T-cell (primary cell): ENCODE measurements at regions of chr13 and their contacts with region 1.

Region 1: DNA sequence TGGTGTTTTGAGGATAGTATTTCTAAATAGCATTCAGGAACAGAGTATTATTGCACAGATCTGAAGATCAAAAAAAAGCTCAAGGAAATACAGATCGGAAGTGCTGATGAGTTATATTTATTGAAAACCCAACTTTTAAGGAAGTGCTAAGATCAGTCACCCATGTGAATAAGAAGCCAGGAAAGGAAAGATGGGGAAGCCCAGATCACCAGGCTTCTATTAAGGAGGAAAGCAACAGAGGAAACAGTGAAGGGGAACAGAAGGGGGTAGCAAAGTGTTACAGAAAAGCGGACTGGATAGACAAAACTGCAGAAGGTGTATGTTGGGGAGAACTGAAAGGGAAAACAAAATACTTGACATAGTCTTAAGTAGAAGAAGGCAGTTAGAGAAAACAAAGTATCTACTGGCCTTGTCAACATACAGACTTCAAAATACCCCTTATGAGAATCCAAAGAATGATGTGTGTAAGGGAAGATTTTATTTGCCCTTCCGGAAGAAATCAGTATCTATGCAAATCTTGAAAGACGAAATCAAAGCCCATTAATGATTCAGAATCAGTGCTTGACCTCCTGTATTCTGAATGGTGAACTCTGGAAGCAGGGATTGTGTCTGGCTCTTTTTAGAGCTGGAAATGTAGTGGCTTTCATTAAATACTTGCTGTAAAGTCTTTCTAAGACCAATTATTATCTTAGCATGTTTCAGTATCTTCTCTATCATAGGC is 12.1 kb downstream of the UFM1 start:
- DNase-seq: no peak
- ATAC-seq: no peak
- H3K4me3 ChIP-seq: no peak overlapping the region
- H3K4me3 Mint-ChIP-seq: no peak overlapping the region
- H3K27ac ChIP-seq: no peak overlapping the region
- H3K27ac Mint-ChIP-seq: no peak overlapping the region
- H3K4me1 ChIP-seq: no peaks in the 10 kb centered on the region
- H3K4me1 Mint-ChIP-seq: peaks cover 4 to 12% (median 4%) of the 10 kb centered on the region in 3 donors
- H3K27me3 ChIP-seq: no peaks in the 10 kb centered on the region
- H3K27me3 Mint-ChIP-seq: no peaks in the 10 kb centered on the region

Region 2: GRCh38 chr13:39037880-39038568 is 676.3 kb after region 1 on chr13 and contains the starts of genes NHLRC3 and PROSER1:
- CTCF ChIA-PET with region 1: no interaction called
- POLR2A ChIA-PET with region 1: interaction called in 1 of 2 experiments, 15 read pairs
- DNase-seq: peak; percentile 72 to 90 (median 80)
- ATAC-seq: peak; percentile 80 to 87 (median 82)
- H3K4me3 ChIP-seq: peak within 1 kb of the TSS; percentile 93 to 99
- H3K4me3 Mint-ChIP-seq: peak within 1 kb of the TSS; percentile 90 to 92 (median 91)
- H3K27ac ChIP-seq: peak within 1 kb of the TSS; percentile 75
- H3K27ac Mint-ChIP-seq: peak within 1 kb of the TSS; percentile 93 to 99
- H3K4me1 ChIP-seq: peaks cover 15 to 25% of the 10 kb centered on the region in 2 experiments
- H3K4me1 Mint-ChIP-seq: peaks cover 60 to 69% (median 60%) of the 10 kb centered on the region in 3 donors
- H3K27me3 ChIP-seq: no peaks in the 10 kb centered on the region
- H3K27me3 Mint-ChIP-seq: no peaks in the 10 kb centered on the region
- total RNA-seq, gene NHLRC3: 16.0 to 22.3 (median 21.8) TPM
- total RNA-seq, gene PROSER1: 40.1 to 50.7 (median 45.1) TPM